Mammary epithelial cell (primary cell): ENCODE measurements at regions of chr2 and their contacts with region 1.

Region 1: GRCh38 chr2:96536445-96537065 is at the start of gene ARID5A:
- DNase-seq: peak; percentile 84
- H3K4me3 ChIP-seq: peak within 1 kb of the TSS; percentile 56 to 74 (median 66)
- H3K27ac ChIP-seq: peak within 1 kb of the TSS; percentile 48
- H3K4me1 ChIP-seq: peaks cover 74% of the 10 kb centered on the region
- H3K27me3 ChIP-seq: no peaks in the 10 kb centered on the region
- CTCF ChIP-seq: no peak
- total RNA-seq, gene ARID5A: 6.6 to 8.3 TPM

Region 2: GRCh38 chr2:96145036-96145847 is 391.3 kb before region 1 on chr2 and contains the start of gene DUSP2:
- CTCF ChIA-PET with region 1: no interaction called
- dilution Hi-C with region 1: no loop called
- in situ Hi-C with region 1: no loop called
- intact Hi-C with region 1: loop called (anchors 10 kb)
- DNase-seq: peak; percentile 58
- H3K4me3 ChIP-seq: peak within 1 kb of the TSS; percentile 37 to 65 (median 62)
- H3K27ac ChIP-seq: peak within 1 kb of the TSS; percentile 4
- H3K4me1 ChIP-seq: peaks cover 40% of the 10 kb centered on the region
- H3K27me3 ChIP-seq: no peaks in the 10 kb centered on the region
- CTCF ChIP-seq: no peak
- total RNA-seq, gene DUSP2: 2.0 to 22.0 TPM

Region 3: DNA sequence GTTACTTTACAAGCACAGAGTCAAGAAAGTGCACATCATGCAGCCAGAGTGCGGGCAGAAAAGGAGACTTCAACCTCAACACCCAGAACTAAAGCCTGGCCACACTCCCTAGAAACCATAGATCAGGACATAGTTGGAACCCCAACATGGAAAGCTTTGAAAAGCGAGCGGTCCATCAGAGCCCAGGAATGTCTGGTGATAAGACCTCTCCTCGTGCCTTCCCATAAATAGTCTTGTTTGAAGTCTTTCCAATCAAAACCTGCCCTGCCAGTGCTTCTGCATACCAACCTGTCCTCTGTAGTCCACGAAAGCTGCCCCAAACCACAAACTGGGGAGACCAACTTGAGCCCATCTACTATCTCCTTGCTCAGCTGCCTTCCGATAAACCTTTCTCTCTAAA is 86.9 kb before region 1 on chr2:
- CTCF ChIA-PET with region 1: no interaction called
- dilution Hi-C with region 1: loop called (anchors 5 kb)
- in situ Hi-C with region 1: no loop called
- intact Hi-C with region 1: no loop called
- DNase-seq: no peak
- H3K4me3 ChIP-seq: no peak overlapping the region
- H3K27ac ChIP-seq: no peak overlapping the region
- H3K4me1 ChIP-seq: no peaks in the 10 kb centered on the region
- H3K27me3 ChIP-seq: no peaks in the 10 kb centered on the region
- CTCF ChIP-seq: no peak

Region 4: DNA sequence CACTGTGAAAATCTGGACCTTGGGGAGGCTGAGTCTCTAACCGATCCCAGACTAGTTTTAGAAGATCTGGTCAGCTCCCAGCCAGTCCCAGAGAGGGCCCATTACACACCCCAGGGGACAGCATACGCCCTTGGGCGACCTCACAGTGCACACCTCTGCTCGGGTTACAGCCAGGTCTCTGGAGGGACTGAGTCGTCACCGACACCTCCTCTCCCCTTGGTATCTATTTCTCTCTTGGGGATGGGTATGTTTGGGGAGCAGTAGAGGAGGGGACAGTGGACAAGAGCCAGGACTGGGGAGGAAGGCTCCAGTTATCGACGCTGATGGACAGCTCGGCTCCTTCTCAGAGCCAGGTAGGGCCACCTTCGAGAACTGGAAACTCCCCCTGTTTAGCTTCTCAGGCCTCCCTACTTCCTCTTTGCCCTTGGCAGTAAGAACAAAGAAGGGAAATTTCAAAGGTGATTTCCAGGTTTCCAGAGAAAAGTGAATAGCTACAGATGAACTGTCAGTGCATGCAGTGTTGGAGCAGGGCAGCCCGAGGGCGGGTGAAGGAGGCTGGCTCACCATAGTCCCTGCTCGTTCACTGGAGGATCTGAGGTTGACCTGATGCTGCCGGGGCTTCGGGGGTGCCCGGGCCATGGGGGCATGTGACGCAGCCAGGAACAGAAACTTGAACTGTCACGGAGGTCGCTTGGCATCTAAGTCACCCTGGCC is 337.7 kb after region 1 on chr2:
- CTCF ChIA-PET with region 1: no interaction called
- dilution Hi-C with region 1: no loop called
- in situ Hi-C with region 1: no loop called
- intact Hi-C with region 1: no loop called
- DNase-seq: peak; percentile 64
- H3K4me3 ChIP-seq: no peak overlapping the region
- H3K27ac ChIP-seq: no peak overlapping the region
- H3K4me1 ChIP-seq: peaks cover 3% of the 10 kb centered on the region
- H3K27me3 ChIP-seq: no peaks in the 10 kb centered on the region
- CTCF ChIP-seq: no peak